Astrocyte of the cerebellum (primary cell): ENCODE measurements at regions of chr9 and their contacts with region 1.

Region 1: DNA sequence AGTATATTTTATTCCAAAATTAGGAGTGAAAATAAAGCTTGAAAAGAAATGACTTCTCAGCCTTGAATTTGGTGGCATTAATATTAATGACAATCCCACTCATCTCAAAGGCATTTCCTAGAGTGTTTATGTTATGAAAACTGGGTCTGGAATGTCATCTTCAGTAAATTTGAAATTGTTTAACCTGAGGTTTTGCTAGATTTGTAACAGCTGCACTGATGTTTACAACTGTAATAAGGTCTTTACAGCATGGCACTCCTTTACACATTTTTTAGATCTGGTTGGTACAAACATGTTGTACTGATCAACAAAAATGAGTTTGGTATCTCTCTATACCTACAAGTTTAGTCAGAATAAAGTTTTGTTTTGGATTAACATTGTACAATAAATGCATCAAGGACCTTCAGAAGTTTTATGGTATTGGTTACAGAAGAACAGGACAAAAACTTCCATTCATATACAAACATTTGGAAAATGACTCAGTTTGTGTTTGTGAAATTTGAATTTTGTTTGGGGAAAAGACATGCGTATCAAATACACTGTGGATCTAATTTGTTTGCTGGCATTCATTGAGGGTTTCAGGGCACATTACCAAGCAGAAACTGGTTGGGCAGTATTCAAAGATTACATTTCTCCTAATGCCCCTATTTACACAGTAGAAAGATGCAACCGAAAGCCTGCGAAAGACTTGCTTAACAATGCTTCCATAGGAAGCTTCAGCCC is 11.6 kb downstream of the FANCC start:
- DNase-seq: peak; percentile 4
- H3K4me3 ChIP-seq: no peak overlapping the region
- CTCF ChIP-seq: no peak

Region 2: GRCh38 chr9:95268681-95269080 is 37.2 kb before region 1 on chr9:
- in situ Hi-C with region 1: loop called (anchors 5 kb)
- DNase-seq: peak; percentile 15
- H3K4me3 ChIP-seq: no peak overlapping the region
- CTCF ChIP-seq: peak; percentile 56